ENCODE measurements at regions of chr17 and their contacts with region 1.

Region 1: DNA sequence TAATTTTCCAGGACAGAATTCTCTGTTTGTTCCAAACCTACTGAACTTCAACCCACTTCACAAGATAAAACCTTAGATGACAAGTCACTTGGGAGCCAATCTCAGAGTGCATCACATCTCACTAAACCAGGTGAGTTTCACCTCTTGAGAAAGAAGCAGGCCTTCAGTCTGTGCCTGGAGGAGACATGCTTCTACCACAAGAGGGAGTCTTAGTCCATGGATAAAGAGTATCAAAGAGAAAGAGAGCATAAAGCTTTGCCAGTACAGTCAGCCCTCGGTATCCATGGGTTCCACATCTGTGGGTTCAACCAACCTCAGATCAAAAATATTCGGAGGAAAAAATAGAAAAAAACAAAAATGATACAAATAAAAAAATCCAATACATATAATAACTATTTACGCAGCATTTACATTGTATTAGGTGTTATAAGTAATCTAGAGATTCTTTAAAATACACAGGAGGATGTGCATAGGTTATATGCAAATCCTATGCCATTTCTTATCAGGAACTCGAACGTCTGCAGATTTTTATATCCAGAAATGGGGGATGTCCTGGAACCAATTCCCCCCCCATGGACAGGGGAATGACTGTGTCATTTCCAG is 37.7 kb downstream of the DUSP14 start:
- DNase-seq: no peak
- H3K4me3 ChIP-seq: no peak overlapping the region
- H3K27me3 ChIP-seq: no peaks in the 10 kb centered on the region
- CTCF ChIP-seq: peak; percentile 78

Region 2: DNA sequence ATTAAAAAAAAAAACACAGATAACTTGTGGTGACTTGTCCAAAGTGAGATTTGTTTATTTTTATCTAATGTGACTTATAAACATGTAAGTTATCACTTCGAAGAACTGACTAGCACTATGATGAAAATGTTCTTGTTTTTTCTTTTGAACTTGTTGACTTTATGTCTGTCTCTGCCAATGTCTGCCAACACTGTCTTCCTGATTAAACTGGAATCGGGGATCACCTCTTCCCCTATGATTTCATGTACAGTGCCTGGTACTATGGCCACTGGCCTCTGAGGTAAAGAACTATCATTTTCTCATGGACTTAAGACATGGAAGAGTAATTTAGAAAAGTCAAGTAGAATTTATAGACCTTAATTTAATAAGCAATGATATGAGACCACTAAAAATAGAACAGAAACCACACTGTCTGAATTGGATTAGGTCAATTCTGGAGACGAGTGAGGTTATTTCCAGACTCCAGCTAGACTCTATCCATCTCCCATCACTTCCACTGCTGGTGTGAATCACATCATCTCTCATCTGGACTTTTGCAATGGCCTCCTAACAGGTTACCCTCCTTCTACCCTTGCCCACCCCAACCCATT is 142.7 kb before region 1 on chr17:
- CTCF ChIA-PET with region 1: no interaction called
- POLR2A ChIA-PET with region 1: no interaction called
- DNase-seq: no peak
- H3K4me3 ChIP-seq: no peak overlapping the region
- H3K27me3 ChIP-seq: no peaks in the 10 kb centered on the region
- CTCF ChIP-seq: no peak

Region 3: GRCh38 chr17:37447641-37448040 is 79.7 kb before region 1 on chr17:
- CTCF ChIA-PET with region 1: no interaction called
- POLR2A ChIA-PET with region 1: no interaction called
- DNase-seq: peak; percentile 17
- H3K4me3 ChIP-seq: no peak overlapping the region
- H3K27me3 ChIP-seq: no peaks in the 10 kb centered on the region
- CTCF ChIP-seq: no peak

Region 4: DNA sequence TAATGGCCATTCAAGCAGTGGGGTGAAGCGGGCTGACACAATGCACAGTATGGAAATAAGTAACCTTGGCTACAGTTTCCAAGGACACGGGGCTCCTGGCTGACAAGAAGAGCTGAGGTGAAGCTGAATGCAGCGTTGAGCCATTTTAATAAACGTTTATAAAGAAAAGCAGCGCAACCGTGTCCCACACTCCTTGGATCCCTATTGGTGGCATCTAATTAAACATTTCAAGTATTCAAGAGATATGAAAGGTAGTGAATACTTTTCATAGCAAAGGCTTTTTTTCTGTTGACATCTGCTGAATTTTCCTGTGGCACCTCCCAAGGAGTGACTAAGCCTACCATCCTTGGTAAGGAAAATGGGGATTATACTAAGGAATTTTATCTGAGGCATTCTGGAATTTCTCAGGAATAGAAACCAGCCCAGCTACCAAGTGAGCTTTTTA is 11.2 kb before region 1 on chr17:
- CTCF ChIA-PET with region 1: interaction called, 14 read pairs
- POLR2A ChIA-PET with region 1: no interaction called
- DNase-seq: no peak
- H3K4me3 ChIP-seq: no peak overlapping the region
- H3K27me3 ChIP-seq: no peaks in the 10 kb centered on the region
- CTCF ChIP-seq: no peak

Region 5: GRCh38 chr17:37592291-37592690 is 64.9 kb after region 1 on chr17:
- CTCF ChIA-PET with region 1: no interaction called
- POLR2A ChIA-PET with region 1: no interaction called
- DNase-seq: no peak
- H3K4me3 ChIP-seq: no peak overlapping the region
- H3K27me3 ChIP-seq: no peaks in the 10 kb centered on the region
- CTCF ChIP-seq: no peak

Region 6: GRCh38 chr17:37640015-37640414 is 112.7 kb after region 1 on chr17:
- CTCF ChIA-PET with region 1: no interaction called
- POLR2A ChIA-PET with region 1: no interaction called
- DNase-seq: no peak
- H3K4me3 ChIP-seq: no peak overlapping the region
- H3K27me3 ChIP-seq: no peaks in the 10 kb centered on the region
- CTCF ChIP-seq: no peak

Measured in BJ (cell line).